Body of pancreas (tissue), 4 donors: ENCODE measurements at regions of chr16 and their contacts with region 1.

Region 1: GRCh38 chr16:58018804-58019203 is 6.8 kb upstream of the MMP15 start:
- DNase-seq: no peak
- ATAC-seq: no peak
- H3K4me3 ChIP-seq: no peak overlapping the region
- H3K27ac ChIP-seq: no peak overlapping the region
- H3K4me1 ChIP-seq: peaks cover 28% of the 10 kb centered on the region
- H3K27me3 ChIP-seq: no peaks in the 10 kb centered on the region
- CTCF ChIP-seq: no peak
- POLR2A ChIP-seq: no peak

Region 2: GRCh38 chr16:57916735-57917451 is 101.9 kb before region 1 on chr16:
- intact Hi-C with region 1: no loop called
- DNase-seq: no peak
- ATAC-seq: no peak
- H3K4me3 ChIP-seq: no peak overlapping the region
- H3K27ac ChIP-seq: no peak overlapping the region
- H3K4me1 ChIP-seq: no peaks in the 10 kb centered on the region
- H3K27me3 ChIP-seq: no peaks in the 10 kb centered on the region
- CTCF ChIP-seq: no peak
- POLR2A ChIP-seq: no peak

Region 3: DNA sequence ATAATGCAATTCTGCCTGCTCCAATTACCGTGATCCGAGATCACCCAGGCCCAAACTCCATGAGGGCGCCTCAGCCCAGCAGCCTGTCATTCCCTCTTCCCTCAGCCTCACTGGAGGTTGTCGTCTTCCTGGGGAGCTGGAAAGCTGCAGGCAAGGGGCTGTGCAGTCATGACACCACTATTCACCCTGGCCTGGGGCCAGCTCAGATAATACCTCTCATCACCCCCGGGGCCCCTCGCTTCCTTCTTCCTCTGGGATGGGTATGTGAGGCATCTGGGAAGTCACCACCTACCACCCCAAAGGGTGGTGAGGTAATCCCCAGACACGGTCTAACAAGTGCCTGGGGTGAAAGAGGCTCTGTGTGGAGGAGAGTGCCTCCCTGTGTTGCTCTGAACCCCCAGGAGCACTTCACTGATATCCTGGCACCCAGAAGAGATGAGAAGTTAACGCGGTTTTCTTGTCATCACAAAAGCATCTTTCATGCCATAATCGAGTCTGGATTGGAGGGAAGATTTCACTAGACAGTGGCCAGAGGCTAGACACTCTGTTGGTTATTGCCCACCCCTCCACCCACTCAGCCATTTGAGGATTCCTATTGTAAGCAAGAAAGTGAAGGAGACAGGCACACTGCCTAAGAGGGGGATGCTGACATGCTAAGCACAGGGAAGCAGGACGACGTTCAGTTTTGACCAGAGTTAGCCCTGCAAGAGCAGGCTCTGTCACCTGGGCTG is 91.9 kb after region 1 on chr16:
- intact Hi-C with region 1: loop called (anchors 5 kb)
- DNase-seq: no peak
- ATAC-seq: no peak
- H3K4me3 ChIP-seq: no peak overlapping the region
- H3K27ac ChIP-seq: no peak overlapping the region
- H3K4me1 ChIP-seq: no peaks in the 10 kb centered on the region
- H3K27me3 ChIP-seq: no peaks in the 10 kb centered on the region
- CTCF ChIP-seq: no peak
- POLR2A ChIP-seq: no peak

Region 4: DNA sequence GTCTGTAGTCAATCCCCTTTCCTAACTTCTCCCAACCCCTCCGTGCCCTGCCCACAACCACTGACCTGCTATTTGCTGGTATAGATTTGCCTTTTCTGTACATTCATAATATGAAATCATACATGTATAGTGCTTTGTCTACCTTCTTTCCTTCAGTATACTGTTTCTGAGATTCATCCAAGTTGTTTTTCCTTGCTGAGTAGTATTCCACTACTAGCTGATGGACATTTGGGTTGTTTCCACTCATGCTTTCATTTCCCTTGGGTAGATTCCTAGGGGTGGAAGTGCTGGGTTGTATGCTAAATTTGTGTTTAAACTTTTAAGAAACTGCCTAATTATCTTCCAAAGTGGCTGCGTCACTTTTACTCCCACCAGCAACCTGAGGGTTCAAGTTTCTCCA is 151.4 kb after region 1 on chr16:
- intact Hi-C with region 1: no loop called
- DNase-seq: no peak
- ATAC-seq: no peak
- H3K4me3 ChIP-seq: no peak overlapping the region
- H3K27ac ChIP-seq: no peak overlapping the region
- H3K4me1 ChIP-seq: no peaks in the 10 kb centered on the region
- H3K27me3 ChIP-seq: no peaks in the 10 kb centered on the region
- CTCF ChIP-seq: no peak
- POLR2A ChIP-seq: no peak